Right ventricle myocardium superior (tissue), 1 donor: ENCODE measurements at regions of chr6 and their contacts with region 1.

Region 1: GRCh38 chr6:162727309-162728182 is at the starts of genes PACRG and PRKN:
- DNase-seq: peak; percentile 99
- ATAC-seq: peak; percentile 99
- total RNA-seq, gene PACRG: 7.4 TPM
- total RNA-seq, gene PRKN: 20.6 TPM

Region 2: DNA sequence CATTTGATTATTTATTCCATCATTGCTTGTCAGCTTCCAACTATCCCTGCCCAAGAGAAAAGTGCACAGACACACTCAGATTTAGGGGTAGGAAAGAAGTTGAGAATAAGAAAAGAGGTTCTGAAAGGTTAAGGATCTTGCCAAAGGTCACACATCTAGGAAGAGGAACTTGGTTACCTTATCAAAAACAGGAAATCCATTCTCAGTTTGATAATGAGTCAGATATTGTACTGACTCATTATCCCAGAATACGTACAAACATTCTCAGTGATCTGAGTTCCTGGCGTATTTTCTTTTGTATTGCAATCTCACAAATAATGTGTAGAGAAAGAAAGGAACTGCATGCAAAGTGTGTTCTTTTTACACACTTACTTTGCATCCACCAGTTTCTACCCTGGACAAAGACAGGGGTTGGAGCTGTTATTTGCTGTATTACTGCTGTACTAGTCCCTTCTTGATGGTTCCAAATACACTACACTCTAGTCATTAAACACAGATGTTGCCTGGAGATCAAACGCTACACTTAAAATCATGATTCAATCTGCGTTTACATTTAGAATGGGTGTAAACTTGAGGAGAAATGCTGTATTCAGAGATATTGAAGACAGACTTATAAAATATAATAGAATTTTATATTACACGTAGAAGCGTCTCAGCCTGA is 545.7 kb before region 1 on chr6:
- intact Hi-C with region 1: loop called (anchors 10 kb)
- DNase-seq: no peak
- ATAC-seq: no peak

Region 3: GRCh38 chr6:162404951-162405350 is 322.6 kb before region 1 on chr6:
- intact Hi-C with region 1: no loop called
- DNase-seq: no peak
- ATAC-seq: no peak

Region 4: DNA sequence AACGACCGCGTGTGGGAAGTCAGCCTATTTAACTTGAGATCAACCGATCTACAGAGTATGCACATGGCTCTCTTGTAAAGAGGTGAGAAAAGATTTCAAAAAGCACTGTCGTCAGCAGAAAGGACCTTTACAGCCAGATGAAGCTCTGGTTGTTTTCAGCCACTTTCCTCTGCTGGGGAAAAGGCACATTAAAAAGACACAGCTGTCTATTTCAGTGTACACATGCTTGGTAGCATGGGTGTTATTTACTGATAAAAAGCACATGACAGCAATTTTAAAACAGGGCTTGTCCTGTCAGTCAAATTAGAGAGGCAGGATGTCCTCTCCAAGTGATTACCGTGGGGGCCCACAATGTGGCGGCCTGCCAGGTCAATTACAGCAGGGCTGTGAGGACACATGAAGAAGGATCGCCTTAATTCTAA is 188.9 kb before region 1 on chr6:
- intact Hi-C with region 1: loop called (anchors 10 kb)
- DNase-seq: peak; percentile 90
- ATAC-seq: peak; percentile 95

Region 5: GRCh38 chr6:162670345-162670744 is 57.2 kb before region 1 on chr6:
- intact Hi-C with region 1: loop called (anchors 10 kb)
- DNase-seq: no peak
- ATAC-seq: peak; percentile 82

Region 6: DNA sequence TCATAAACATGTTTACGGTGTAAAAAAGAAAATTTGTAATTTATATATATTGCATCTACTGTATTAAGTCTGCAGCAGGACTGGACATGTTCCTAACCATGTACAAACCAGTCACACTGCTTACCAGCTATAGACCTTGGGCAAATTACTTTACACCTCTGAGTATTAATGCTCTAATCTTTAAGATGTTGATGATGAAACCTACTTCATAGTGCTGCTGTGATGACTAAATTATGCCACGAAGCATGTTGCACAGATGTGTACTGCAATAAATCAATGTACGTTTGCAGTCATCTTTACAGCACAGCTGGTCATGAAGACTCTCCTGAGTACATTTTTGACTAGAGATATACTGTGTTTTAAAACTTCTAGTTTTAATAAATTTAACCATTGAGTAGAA is 42.6 kb before region 1 on chr6:
- intact Hi-C with region 1: no loop called
- DNase-seq: no peak
- ATAC-seq: no peak

Region 7: DNA sequence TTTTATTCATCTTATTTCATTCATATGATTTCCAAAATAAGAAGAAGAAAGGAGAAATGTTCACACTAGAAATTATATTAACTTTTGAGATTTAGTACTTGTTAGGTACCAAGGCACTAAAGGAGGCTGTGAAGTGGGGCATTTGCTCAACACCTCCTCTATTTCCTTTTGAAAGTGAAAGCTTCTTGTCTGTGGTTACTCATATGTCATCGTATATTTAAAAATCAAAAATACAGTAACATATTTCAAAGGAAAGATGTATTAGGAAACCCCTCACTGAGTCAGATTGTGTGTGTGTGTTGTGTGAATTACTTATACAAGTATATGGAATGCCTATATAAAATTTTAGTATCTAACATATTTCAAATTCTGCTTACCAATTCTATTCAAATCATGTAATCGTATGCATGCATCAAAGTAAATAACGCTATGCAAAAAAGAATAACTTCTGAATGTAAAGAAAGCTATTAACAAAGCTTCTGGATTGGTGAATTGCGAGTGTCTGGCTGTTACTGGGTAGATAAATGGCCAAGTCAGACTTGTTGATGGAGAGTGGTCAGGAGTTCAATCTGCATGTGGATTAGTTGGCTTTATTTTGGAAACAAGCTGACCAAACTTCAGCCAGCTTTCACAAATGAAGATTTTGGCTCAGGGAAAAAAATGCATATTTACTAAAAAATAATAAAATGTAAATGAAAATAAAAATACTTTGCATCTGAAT is 71.2 kb after region 1 on chr6:
- intact Hi-C with region 1: no loop called
- DNase-seq: no peak
- ATAC-seq: no peak